ENCODE measurements at regions of chr5 and their contacts with region 1.

Region 1: DNA sequence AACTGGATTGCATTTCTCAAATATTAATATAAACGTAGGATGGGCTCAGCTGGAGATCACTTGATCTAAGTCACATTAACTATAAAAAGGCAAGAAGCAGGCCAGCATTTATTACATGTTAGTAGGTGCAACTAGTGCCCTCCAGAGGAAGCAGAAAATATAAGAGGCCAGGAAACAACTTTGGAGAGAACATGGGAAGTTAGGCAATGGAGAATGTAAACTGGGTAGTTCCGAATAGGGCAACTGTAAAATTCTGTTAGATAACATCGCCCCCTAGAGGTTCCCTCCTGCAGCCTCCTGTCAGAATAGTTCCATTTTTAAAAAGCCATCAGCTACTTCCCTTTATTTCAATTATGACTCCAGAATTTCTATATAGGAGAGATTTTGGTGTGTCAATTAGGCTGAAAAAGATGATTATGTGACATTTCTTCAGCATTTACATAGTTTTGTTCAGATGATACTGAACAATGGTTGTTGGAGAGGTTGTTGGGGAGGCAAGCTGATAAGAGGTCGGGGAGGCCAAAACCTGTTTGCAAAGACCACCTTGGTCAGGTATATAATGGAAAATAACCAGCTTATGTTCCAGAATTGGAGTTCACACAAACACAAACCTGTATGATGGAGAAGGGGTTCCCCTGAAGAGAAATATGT is 22.4 kb downstream of the CCL28 start:
- DNase-seq: peak; percentile 63
- ATAC-seq: peak; percentile 85
- H3K4me3 Mint-ChIP-seq: no peak overlapping the region
- H3K27ac Mint-ChIP-seq: no peak overlapping the region
- H3K4me1 Mint-ChIP-seq: peaks cover 32% of the 10 kb centered on the region
- H3K27me3 Mint-ChIP-seq: no peaks in the 10 kb centered on the region

Region 2: DNA sequence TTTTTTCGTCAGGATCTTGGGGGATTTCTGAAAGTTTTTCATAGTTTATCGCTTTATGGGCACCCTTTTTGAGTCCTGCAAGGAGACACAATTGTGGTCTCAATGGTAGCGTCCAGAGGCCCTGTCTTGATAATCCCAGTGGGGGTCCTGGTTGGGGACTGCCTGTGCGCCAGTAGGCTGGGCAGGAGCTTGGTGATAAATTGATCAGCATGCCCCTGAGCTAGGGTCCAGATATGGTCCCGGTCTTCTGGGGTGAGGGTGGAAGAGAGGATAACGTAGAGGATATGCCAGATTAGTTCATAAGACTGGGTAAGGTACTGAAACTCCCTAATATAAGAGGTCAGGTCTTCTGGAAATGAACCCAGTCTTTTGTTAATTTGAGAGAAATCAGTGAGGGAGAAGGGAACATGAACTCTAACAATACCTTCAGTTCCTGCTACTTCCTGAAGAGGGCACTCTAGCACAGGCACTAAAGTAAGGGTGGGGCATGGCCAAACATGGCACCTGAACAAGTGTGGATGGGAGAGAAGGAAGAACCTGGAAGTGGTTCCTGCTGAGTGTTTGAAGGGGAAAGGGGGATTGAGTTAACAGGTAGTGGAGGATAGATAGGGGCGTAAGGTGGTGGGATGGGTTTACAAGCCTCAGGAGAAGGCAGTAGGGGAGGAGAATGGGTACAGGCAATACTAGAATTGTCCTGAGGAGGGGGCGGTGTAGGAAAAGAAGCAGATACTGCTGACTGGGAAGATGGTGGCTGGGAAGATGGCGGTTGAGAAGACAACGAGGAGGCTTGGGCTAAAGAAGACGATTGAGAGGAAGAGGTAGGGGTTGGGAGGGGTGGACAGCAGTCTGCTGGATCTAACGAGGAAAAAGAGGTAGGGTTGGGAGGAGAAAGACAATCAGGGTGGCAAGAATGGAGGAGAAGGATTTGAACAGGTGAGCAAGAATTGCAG is 315.9 kb before region 1 on chr5:
- CTCF ChIA-PET with region 1: interaction called, 9 read pairs
- POLR2A ChIA-PET with region 1: no interaction called
- intact Hi-C with region 1: loop called (anchors 1 to 5 kb)
- DNase-seq: peak; percentile 69
- ATAC-seq: peak; percentile 78
- H3K4me3 Mint-ChIP-seq: no peak overlapping the region
- H3K27ac Mint-ChIP-seq: no peak overlapping the region
- H3K4me1 Mint-ChIP-seq: peaks cover 38% of the 10 kb centered on the region
- H3K27me3 Mint-ChIP-seq: no peaks in the 10 kb centered on the region

Region 3: GRCh38 chr5:43140286-43140685 is 249.5 kb before region 1 on chr5:
- CTCF ChIA-PET with region 1: interaction called, 13 read pairs
- POLR2A ChIA-PET with region 1: no interaction called
- intact Hi-C with region 1: no loop called
- DNase-seq: no peak
- ATAC-seq: peak; percentile 89
- H3K4me3 Mint-ChIP-seq: no peak overlapping the region
- H3K27ac Mint-ChIP-seq: peak overlapping the region; percentile 31
- H3K4me1 Mint-ChIP-seq: peaks cover 42% of the 10 kb centered on the region
- H3K27me3 Mint-ChIP-seq: no peaks in the 10 kb centered on the region

Region 4: DNA sequence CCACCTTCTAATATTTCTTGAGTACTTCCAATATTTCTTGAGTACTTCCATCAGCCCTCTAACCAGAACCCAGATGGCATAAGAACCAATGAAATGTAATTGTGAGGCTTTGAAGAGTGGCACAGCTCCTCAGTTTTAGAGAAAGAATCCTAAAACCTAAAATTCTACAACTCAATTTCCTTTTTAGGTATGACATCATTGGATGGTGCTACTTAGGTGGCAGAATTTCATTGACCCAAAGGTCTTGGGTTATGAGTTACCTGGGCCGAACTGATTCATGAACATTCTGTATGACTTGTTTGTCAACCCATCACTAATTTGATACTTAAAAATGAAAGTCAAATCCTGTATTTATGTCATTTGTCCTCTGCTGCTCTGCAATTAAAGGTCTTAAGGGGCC is 89.7 kb before region 1 on chr5:
- CTCF ChIA-PET with region 1: interaction called, 35 read pairs
- POLR2A ChIA-PET with region 1: no interaction called
- intact Hi-C with region 1: no loop called
- DNase-seq: no peak
- ATAC-seq: no peak
- H3K4me3 Mint-ChIP-seq: no peak overlapping the region
- H3K27ac Mint-ChIP-seq: no peak overlapping the region
- H3K4me1 Mint-ChIP-seq: peaks cover 40% of the 10 kb centered on the region
- H3K27me3 Mint-ChIP-seq: no peaks in the 10 kb centered on the region

Region 5: GRCh38 chr5:43602461-43603343 is 212.9 kb after region 1 on chr5 and contains the start of gene NNT:
- CTCF ChIA-PET with region 1: no interaction called
- POLR2A ChIA-PET with region 1: no interaction called
- intact Hi-C with region 1: loop called in 1 of 2 experiments (anchors 10 kb)
- DNase-seq: peak; percentile 89
- ATAC-seq: peak; percentile 76
- H3K4me3 Mint-ChIP-seq: peak within 1 kb of the TSS; percentile 95
- H3K27ac Mint-ChIP-seq: peak within 1 kb of the TSS; percentile 93
- H3K4me1 Mint-ChIP-seq: peaks cover 29% of the 10 kb centered on the region
- H3K27me3 Mint-ChIP-seq: no peaks in the 10 kb centered on the region
- total RNA-seq, gene NNT: 55.4 to 77.5 TPM

Region 6: DNA sequence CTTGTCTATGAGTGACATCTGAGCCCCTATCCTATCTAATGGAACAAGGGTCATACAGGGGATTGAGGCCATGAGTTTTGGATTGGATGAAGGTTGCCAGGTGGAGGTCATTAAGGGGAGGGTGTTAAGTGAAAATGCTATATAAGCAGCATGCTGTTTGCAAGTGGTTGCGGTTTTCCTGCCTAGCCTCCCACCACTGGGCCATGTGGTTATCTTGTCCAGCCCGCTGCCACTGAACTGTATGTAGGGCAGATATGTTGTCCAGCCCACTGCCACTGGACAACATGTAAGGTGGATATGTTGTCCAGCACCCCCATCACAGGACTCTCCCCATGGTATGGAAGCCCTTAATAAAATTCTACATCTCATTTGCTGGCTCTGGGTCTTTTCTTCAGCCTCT is 799.5 kb after region 1 on chr5:
- CTCF ChIA-PET with region 1: no interaction called
- POLR2A ChIA-PET with region 1: no interaction called
- intact Hi-C with region 1: no loop called
- DNase-seq: no peak
- ATAC-seq: no peak
- H3K4me3 Mint-ChIP-seq: no peak overlapping the region
- H3K27ac Mint-ChIP-seq: no peak overlapping the region
- H3K4me1 Mint-ChIP-seq: no peaks in the 10 kb centered on the region
- H3K27me3 Mint-ChIP-seq: no peaks in the 10 kb centered on the region

Region 7: GRCh38 chr5:44708611-44709010 is 1318.8 kb after region 1 on chr5:
- CTCF ChIA-PET with region 1: no interaction called
- POLR2A ChIA-PET with region 1: no interaction called
- intact Hi-C with region 1: no loop called
- DNase-seq: no peak
- ATAC-seq: no peak
- H3K4me3 Mint-ChIP-seq: no peak overlapping the region
- H3K27ac Mint-ChIP-seq: no peak overlapping the region
- H3K4me1 Mint-ChIP-seq: no peaks in the 10 kb centered on the region
- H3K27me3 Mint-ChIP-seq: no peaks in the 10 kb centered on the region

Measured in activated CD4-positive, alpha-beta T cell treated with anti-CD3 and anti-CD28 coated beads for 36 hours (primary cell).